Activated CD4-positive, alpha-beta T cell treated with anti-CD3 and anti-CD28 coated beads for 36 hours (primary cell): ENCODE measurements at regions of chr10 and their contacts with region 1.

Region 1: DNA sequence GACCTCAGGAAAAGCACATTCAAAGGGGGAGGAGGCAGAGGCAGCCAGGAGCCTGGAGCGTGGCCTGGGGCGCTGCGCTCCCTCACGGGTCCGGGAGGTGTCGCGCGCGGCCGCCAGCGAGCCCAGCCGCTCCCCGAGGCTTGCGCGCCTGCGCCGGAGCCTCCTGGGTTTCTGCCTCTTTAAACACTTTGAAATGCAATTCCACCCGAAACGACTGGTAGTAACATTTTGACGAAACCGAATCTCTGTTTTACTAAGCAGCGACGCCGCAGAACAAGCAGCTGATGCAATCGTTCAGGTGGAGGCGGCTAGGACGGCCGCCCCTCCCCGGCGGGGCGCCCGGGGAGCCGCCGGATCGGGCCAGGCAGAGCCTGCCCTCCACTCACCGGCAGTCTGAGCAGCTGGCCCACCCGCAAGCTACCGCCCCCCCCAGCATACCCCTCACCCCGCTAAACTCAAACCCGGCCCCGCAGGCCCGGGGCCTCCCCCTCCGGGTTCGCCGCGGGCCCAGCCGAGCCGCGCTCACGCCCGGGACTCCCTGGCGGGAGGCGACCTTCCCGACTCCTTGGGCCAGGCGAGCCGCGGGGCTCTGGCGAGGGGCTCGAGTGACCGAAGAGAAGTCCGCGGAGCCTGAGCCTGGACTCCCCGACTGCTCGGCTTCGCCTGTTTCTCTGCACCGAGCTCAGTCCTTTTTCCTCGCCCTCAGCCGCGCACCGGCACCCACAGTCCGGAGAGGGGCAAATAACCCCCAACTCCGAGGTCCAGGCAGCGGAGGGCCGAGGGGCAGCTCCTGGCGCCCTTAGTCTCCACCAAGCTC is 3.2 kb downstream of the MKX start:
- DNase-seq: peak; percentile 92
- ATAC-seq: peak; percentile 91
- H3K4me3 Mint-ChIP-seq: peak overlapping the region; percentile 65
- H3K27ac Mint-ChIP-seq: peak overlapping the region; percentile 47
- H3K4me1 Mint-ChIP-seq: peaks cover 33% of the 10 kb centered on the region
- H3K27me3 Mint-ChIP-seq: peaks cover 56% of the 10 kb centered on the region

Region 2: GRCh38 chr10:27241652-27242472 is 500.5 kb before region 1 on chr10:
- CTCF ChIA-PET with region 1: no interaction called
- POLR2A ChIA-PET with region 1: no interaction called
- intact Hi-C with region 1: loop called in 1 of 2 experiments (anchors 2 kb)
- DNase-seq: peak; percentile 94
- ATAC-seq: peak; percentile 71
- H3K4me3 Mint-ChIP-seq: peak overlapping the region; percentile 98
- H3K27ac Mint-ChIP-seq: peak overlapping the region; percentile 100
- H3K4me1 Mint-ChIP-seq: peaks cover 28% of the 10 kb centered on the region
- H3K27me3 Mint-ChIP-seq: no peaks in the 10 kb centered on the region

Region 3: GRCh38 chr10:28087661-28088351 is 345.4 kb after region 1 on chr10:
- CTCF ChIA-PET with region 1: no interaction called
- POLR2A ChIA-PET with region 1: no interaction called
- intact Hi-C with region 1: loop called in 1 of 2 experiments (anchors 5 kb)
- DNase-seq: peak; percentile 22
- ATAC-seq: peak; percentile 90
- H3K4me3 Mint-ChIP-seq: no peak overlapping the region
- H3K27ac Mint-ChIP-seq: peak overlapping the region; percentile 95
- H3K4me1 Mint-ChIP-seq: peaks cover 18% of the 10 kb centered on the region
- H3K27me3 Mint-ChIP-seq: no peaks in the 10 kb centered on the region

Region 4: GRCh38 chr10:28241741-28242399 is 499.5 kb after region 1 on chr10:
- CTCF ChIA-PET with region 1: interaction called, 10 read pairs
- POLR2A ChIA-PET with region 1: no interaction called
- intact Hi-C with region 1: loop called (anchors 1 kb)
- DNase-seq: peak; percentile 57
- ATAC-seq: peak; percentile 79
- H3K4me3 Mint-ChIP-seq: no peak overlapping the region
- H3K27ac Mint-ChIP-seq: no peak overlapping the region
- H3K4me1 Mint-ChIP-seq: peaks cover 30% of the 10 kb centered on the region
- H3K27me3 Mint-ChIP-seq: no peaks in the 10 kb centered on the region

Region 5: DNA sequence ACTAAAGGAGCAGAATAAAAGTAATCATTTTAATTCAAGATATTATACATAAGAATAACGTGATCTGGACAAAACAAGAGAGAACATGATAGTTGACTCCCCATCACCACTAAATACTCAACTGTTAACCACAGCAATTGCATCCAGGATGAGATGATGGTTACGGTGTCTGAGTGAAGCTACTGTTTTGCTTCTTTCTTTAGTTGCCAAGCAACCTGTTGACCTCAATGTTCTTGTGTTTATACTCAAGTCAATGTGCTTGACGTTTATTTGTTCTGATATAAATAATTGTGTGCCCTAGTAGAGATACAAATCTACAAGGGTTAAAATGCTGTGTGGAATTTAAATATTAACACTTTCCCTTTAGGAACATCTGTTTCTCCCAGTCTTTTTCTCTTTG is 591.9 kb after region 1 on chr10:
- CTCF ChIA-PET with region 1: interaction called, 6 read pairs
- POLR2A ChIA-PET with region 1: no interaction called
- intact Hi-C with region 1: loop called (anchors 1 kb)
- DNase-seq: peak; percentile 43
- ATAC-seq: peak; percentile 62
- H3K4me3 Mint-ChIP-seq: peak overlapping the region; percentile 79
- H3K27ac Mint-ChIP-seq: peak overlapping the region; percentile 100
- H3K4me1 Mint-ChIP-seq: peaks cover 70% of the 10 kb centered on the region
- H3K27me3 Mint-ChIP-seq: no peaks in the 10 kb centered on the region